ENCODE measurements at regions of chr2 and their contacts with region 1.

Region 1: GRCh38 chr2:85648619-85649018 is 19.4 kb downstream of the SFTPB start:
- DNase-seq: no peak
- ATAC-seq: peak in 1 of 2 donors; percentile 70
- H3K4me3 ChIP-seq: no peak overlapping the region
- H3K27ac ChIP-seq: no peak overlapping the region
- H3K4me1 ChIP-seq: peaks cover 3% of the 10 kb centered on the region
- H3K27me3 ChIP-seq: no peaks in the 10 kb centered on the region

Region 2: DNA sequence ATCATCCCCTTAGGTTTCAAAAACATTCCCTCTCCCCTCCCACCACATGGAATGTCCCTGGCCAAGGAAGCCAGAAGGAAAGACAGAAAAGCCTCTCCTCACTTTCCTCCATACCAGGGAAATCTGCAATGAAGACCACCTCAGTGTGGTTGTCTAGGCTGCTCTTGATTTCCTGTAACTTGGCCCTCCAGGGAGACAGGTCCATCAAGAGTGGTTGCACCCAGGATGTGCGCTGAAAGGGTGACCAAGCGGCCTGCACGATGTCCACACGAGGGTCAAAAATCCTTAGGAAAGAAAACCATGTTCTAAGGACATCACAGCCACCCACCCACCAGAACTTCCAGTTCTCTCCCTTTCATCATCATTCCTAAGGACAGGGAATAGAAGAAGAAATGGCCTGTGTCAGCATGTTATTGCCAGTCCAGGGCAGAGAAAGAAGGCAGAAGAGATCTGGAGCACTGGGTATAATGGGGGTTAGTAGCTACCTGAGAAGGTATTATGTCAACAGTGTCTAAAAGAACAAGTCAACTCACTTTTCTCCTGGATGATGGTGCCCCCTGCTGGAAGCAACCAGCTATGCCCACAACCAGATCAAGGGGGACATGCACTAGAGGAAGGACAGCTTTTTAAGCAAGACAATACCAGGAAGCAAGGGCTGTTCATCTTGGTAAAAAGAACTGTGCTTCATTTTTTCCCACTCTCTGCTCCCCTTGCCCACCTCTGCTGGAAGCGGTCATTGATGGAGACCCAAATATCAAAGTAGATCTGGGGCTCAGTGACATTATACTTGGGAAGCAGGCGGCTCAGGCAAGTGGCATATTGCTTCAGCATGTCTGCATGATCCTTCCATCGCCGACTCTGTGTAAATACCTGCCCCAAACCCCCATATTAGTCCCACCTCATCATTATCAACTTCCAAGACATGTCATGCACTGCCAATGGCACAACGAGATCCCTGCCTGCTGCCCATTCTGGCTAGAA is 96.6 kb before region 1 on chr2:
- intact Hi-C with region 1: no loop called
- DNase-seq: peak; percentile 71 to 88 (median 87)
- ATAC-seq: peak; percentile 68 to 69
- H3K4me3 ChIP-seq: no peak overlapping the region
- H3K27ac ChIP-seq: no peak overlapping the region
- H3K4me1 ChIP-seq: no peaks in the 10 kb centered on the region
- H3K27me3 ChIP-seq: no peaks in the 10 kb centered on the region

Region 3: DNA sequence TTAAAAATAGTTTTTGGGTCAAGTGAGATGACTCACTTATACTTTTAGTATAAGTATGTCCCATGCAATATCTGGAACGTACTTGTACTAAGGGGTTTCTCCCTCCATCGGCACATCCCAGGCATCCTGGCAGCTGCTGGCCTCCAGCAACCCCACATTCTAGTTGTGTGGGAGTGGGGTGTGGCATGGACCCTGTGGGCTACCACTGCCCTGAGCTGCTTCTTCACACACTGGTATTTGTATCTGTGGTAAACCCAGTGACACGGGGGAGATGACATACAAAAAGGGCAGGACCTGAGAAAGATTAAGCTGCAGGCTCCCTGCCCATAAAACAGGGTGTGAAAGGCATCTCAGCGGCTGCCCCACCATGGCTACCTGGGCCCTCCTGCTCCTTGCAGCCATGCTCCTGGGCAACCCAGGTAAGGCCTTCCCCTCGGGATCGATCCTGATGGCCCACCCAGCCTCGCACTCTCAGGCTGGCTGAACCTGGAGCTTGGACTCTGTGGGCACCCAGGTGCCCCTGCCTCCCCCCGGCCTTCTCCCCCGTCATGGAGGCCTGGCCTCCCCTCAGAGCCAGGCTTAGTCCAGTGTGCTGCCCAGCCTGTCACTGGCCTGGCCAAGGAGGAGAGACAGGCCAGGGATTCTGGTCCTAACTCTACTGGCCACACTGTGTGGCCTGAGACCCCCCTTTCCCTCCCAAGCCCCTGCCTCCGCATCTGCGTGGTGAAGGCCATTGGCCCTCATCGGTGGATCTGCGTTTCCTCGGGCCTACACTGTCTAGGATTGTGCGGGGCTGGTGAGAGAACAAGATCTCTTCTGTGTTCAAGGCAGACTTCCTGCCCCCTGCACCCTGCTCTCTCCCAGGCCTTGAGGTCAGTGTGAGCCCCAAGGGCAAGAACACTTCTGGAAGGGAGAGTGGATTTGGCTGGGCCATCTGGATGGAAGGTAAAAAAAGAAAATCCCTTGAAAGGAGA is 45.7 kb after region 1 on chr2 and contains the start of gene GNLY:
- intact Hi-C with region 1: no loop called
- DNase-seq: no peak
- ATAC-seq: peak in 1 of 2 donors; percentile 12
- H3K4me3 ChIP-seq: no peak within 1 kb of the TSS
- H3K27ac ChIP-seq: no peak within 1 kb of the TSS
- H3K4me1 ChIP-seq: no peaks in the 10 kb centered on the region
- H3K27me3 ChIP-seq: no peaks in the 10 kb centered on the region
- total RNA-seq, gene GNLY: 1.4 to 2.3 (median 2.1) TPM in 3 of 4 donors, not detected in the other

Region 4: GRCh38 chr2:85707304-85707703 is 58.7 kb after region 1 on chr2:
- intact Hi-C with region 1: loop called in 1 of 4 experiments (anchors 5 kb)
- DNase-seq: peak in 1 of 3 donors; percentile 20
- ATAC-seq: peak in 1 of 2 donors; percentile 38
- H3K4me3 ChIP-seq: no peak overlapping the region
- H3K27ac ChIP-seq: no peak overlapping the region
- H3K4me1 ChIP-seq: peaks cover 21% of the 10 kb centered on the region
- H3K27me3 ChIP-seq: no peaks in the 10 kb centered on the region